ENCODE measurements at regions of chr6 and their contacts with region 1.

Region 1: GRCh38 chr6:104483225-104483834 is 376.4 kb downstream of the HACE1 start:
- DNase-seq: peak; percentile 44
- ATAC-seq: no peak
- H3K4me3 ChIP-seq: no peak overlapping the region
- H3K27ac ChIP-seq: no peak overlapping the region
- H3K4me1 ChIP-seq: no peaks in the 10 kb centered on the region
- H3K27me3 ChIP-seq: no peaks in the 10 kb centered on the region
- CTCF ChIP-seq: peak; percentile 67

Region 2: GRCh38 chr6:103797738-103798137 is 685.6 kb before region 1 on chr6:
- CTCF ChIA-PET with region 1: interaction called, 4 read pairs
- POLR2A ChIA-PET with region 1: no interaction called
- intact Hi-C with region 1: loop called (anchors 5 kb)
- DNase-seq: peak; percentile 30
- ATAC-seq: no peak
- H3K4me3 ChIP-seq: no peak overlapping the region
- H3K27ac ChIP-seq: no peak overlapping the region
- H3K4me1 ChIP-seq: no peaks in the 10 kb centered on the region
- H3K27me3 ChIP-seq: no peaks in the 10 kb centered on the region
- CTCF ChIP-seq: peak; percentile 56

Region 3: DNA sequence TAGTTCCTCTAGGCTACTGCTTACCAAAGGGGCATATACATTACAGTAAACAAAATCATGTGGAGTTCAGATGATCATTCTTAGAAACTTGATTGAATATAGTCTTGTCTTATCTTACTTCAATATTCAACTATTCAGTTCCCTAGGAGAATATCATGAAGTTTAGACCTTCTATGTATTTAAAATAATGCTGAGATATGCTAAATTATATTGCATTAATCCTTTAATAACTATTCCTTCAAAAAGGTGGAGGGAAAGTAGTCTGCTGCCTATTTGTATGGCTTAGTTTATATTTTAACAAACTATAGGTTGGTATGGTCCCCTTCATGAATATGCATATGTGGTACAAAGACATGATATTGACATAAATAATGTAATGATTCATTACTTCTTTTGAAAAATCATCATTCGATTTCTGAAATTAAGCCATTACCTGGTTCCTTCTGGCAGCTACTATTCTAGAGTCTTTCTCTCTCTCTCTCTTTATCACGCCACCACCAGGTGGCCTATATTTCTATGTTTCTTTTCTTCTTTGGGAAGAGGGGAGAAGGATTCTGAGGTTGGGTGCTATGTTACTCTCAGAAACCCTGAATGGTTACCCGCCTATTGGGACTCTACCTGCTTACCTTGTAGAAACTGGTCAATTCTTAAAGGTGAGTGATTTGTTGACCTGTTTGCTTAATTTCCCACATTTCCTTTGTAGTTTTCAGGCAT is 479.4 kb before region 1 on chr6:
- CTCF ChIA-PET with region 1: no interaction called
- POLR2A ChIA-PET with region 1: no interaction called
- intact Hi-C with region 1: no loop called
- DNase-seq: peak; percentile 39
- ATAC-seq: no peak
- H3K4me3 ChIP-seq: no peak overlapping the region
- H3K27ac ChIP-seq: no peak overlapping the region
- H3K4me1 ChIP-seq: no peaks in the 10 kb centered on the region
- H3K27me3 ChIP-seq: no peaks in the 10 kb centered on the region
- CTCF ChIP-seq: peak; percentile 54

Region 4: DNA sequence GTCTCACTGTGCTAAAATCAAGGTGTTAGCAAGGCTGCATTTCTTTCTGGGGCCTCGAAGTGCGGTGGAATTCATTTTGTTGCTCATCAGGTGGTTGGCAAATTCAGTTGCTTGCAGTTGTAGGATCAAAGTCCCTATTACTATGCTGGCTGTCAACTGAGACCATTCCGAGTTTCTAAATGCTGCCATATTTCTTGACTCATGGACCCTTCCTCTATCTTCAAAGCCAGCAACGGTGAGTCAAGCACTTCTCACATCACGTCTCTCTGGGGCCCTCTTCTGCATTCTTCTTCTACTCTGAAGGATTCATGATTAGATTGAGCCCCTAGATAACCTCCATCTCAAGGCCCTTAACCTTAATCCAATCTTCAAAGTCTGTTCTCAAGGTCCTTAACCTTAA is 243.4 kb before region 1 on chr6:
- CTCF ChIA-PET with region 1: no interaction called
- POLR2A ChIA-PET with region 1: no interaction called
- intact Hi-C with region 1: loop called (anchors 10 kb)
- DNase-seq: no peak
- ATAC-seq: no peak
- H3K4me3 ChIP-seq: no peak overlapping the region
- H3K27ac ChIP-seq: no peak overlapping the region
- H3K4me1 ChIP-seq: no peaks in the 10 kb centered on the region
- H3K27me3 ChIP-seq: no peaks in the 10 kb centered on the region
- CTCF ChIP-seq: no peak

Region 5: GRCh38 chr6:104431096-104431495 is 52.2 kb before region 1 on chr6:
- CTCF ChIA-PET with region 1: no interaction called
- POLR2A ChIA-PET with region 1: no interaction called
- intact Hi-C with region 1: no loop called
- DNase-seq: no peak
- ATAC-seq: no peak
- H3K4me3 ChIP-seq: no peak overlapping the region
- H3K27ac ChIP-seq: no peak overlapping the region
- H3K4me1 ChIP-seq: no peaks in the 10 kb centered on the region
- H3K27me3 ChIP-seq: no peaks in the 10 kb centered on the region
- CTCF ChIP-seq: no peak

Region 6: DNA sequence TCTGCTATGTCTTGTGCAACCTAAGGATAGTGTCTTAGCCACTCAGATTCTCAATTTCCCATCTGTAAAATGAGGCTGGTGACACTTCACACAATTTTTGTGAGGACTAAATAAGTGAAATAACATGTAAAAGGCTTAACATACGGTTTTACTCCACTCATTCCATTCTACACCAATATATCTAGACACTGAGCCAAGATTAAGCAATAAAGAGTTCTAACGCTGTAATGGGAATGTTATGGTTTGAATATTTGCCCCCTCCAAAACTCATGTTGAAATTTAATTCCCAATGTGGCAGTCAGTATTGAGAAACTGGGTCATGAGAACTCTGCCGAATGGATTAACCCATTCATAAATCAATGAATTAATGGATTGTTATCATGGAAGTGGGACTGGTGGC is 75.4 kb after region 1 on chr6:
- CTCF ChIA-PET with region 1: no interaction called
- POLR2A ChIA-PET with region 1: no interaction called
- intact Hi-C with region 1: no loop called
- DNase-seq: no peak
- ATAC-seq: no peak
- H3K4me3 ChIP-seq: no peak overlapping the region
- H3K27ac ChIP-seq: no peak overlapping the region
- H3K4me1 ChIP-seq: no peaks in the 10 kb centered on the region
- H3K27me3 ChIP-seq: no peaks in the 10 kb centered on the region
- CTCF ChIP-seq: no peak